Naive thymus-derived CD8-positive, alpha-beta T cell (primary cell): ENCODE measurements at regions of chr2 and their contacts with region 1.

Region 1: DNA sequence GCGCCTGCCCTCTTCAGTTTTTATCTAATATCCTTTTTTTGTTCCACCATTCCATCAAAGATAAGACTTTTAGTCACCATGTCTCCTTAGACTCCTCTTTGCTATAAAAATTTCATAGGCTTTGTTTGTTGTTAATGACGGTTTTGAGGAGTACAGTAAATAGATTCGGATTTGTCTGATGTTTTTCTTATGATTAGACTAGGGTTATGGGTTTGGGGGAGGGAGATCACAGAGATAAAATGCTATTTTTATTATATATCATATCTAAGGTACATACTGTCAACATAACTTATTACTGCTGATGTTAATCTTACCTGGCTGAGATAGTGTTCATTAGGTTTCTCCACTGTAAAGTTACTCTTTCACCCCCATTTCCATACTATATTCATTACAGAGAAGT is 6.2 kb downstream of the IL36B start:
- DNase-seq: no peak
- ATAC-seq: no peak
- H3K4me3 Mint-ChIP-seq: no peak overlapping the region
- H3K27ac Mint-ChIP-seq: no peak overlapping the region
- H3K4me1 Mint-ChIP-seq: peaks cover 0 to 3% (median 0%) of the 10 kb centered on the region in 4 donors
- H3K27me3 Mint-ChIP-seq: peaks cover 0 to 5% (median 0%) of the 10 kb centered on the region in 5 donors

Region 2: DNA sequence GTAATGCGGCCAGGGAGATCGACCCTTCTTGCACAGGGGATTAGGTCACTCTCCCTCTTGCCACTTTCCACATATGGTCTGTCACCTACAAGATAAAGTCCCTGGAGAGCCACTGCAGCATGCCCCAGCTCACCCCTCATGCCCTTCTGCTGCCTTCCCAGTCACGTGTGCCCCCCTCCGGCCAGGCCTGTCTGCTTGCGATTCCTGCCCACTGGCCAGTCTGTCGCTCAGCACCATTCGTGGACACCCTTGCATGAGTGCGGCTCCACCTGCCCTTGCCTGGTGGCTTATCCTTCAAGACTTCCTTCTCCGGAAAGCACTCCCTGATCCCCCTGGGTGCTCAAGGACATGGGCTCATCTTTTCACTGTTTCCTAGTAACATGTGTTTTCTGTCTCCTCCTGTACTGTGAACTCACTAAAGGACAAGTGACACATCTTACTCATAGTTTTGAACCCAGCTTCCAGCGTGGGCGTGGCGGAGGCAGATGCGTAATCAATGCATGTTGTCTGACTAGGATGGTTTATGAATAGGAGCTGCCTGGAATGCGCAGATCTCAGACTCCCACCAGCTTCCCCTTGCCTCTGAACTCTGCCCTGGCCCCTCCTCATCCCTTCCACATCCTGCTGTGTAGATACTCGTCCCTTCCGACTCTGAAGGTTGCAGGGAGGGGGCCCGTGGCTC is 333.5 kb before region 1 on chr2:
- POLR2A ChIA-PET with region 1: interaction called, 10 read pairs
- DNase-seq: no peak
- ATAC-seq: no peak
- H3K4me3 Mint-ChIP-seq: peak overlapping the region in 1 of 10 donors; percentile 36
- H3K27ac Mint-ChIP-seq: no peak overlapping the region
- H3K4me1 Mint-ChIP-seq: peaks cover 0 to 25% (median 0%) of the 10 kb centered on the region in 4 donors
- H3K27me3 Mint-ChIP-seq: peaks cover 0 to 35% (median 5%) of the 10 kb centered on the region in 5 donors

Region 3: DNA sequence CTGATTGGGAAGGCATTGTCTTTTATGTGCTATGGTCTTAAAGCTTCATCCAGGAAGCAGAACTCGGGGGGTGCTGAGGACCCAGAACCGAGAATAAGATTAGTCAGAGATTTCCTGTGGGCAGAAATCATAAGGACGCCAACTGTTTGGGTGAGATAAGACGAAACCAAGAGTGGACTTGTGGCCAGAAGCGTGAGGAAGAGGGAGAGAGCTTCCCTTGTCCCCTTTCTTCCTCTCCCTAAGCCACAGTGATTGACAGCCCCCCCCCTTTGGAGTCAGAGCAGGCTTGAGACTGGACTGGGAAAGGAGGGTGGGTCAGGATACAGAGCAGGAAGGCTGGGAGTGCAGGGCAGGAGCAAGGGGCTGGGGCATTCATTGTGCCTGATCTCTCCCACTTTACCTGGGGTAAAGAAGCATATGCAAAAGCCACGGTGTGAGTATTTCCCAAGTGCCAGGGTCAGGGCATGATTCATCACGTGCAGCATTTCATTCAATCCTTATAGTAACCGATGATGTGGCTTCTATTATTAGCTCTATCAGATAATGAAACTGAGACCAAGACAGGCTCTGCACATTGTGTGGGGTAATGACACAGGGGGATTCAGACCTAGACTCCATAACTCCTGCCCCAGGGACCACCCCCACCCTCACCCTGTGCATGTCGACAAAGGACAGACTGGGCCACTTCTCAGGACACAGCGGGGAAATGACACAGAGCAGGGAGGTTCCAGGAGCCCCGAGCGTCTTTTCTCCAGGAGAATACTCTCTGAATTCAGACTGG is 77.9 kb after region 1 on chr2:
- POLR2A ChIA-PET with region 1: no interaction called
- DNase-seq: no peak
- ATAC-seq: no peak
- H3K4me3 Mint-ChIP-seq: peak overlapping the region in 1 of 10 donors; percentile 15
- H3K27ac Mint-ChIP-seq: no peak overlapping the region
- H3K4me1 Mint-ChIP-seq: peaks cover 2 to 23% (median 13%) of the 10 kb centered on the region in 4 donors
- H3K27me3 Mint-ChIP-seq: peaks cover 3 to 26% (median 8%) of the 10 kb centered on the region in 5 donors

Region 4: GRCh38 chr2:113784823-113785744 is 738.6 kb after region 1 on chr2:
- POLR2A ChIA-PET with region 1: no interaction called
- DNase-seq: no peak
- ATAC-seq: no peak
- H3K4me3 Mint-ChIP-seq: no peak overlapping the region
- H3K27ac Mint-ChIP-seq: no peak overlapping the region
- H3K4me1 Mint-ChIP-seq: peaks cover 0 to 6% (median under 1%) of the 10 kb centered on the region in 4 donors
- H3K27me3 Mint-ChIP-seq: peaks cover 0 to 2% (median 0%) of the 10 kb centered on the region in 5 donors